AG04449 (cell line): ENCODE measurements at regions of chr6 and their contacts with region 1.

Region 1: DNA sequence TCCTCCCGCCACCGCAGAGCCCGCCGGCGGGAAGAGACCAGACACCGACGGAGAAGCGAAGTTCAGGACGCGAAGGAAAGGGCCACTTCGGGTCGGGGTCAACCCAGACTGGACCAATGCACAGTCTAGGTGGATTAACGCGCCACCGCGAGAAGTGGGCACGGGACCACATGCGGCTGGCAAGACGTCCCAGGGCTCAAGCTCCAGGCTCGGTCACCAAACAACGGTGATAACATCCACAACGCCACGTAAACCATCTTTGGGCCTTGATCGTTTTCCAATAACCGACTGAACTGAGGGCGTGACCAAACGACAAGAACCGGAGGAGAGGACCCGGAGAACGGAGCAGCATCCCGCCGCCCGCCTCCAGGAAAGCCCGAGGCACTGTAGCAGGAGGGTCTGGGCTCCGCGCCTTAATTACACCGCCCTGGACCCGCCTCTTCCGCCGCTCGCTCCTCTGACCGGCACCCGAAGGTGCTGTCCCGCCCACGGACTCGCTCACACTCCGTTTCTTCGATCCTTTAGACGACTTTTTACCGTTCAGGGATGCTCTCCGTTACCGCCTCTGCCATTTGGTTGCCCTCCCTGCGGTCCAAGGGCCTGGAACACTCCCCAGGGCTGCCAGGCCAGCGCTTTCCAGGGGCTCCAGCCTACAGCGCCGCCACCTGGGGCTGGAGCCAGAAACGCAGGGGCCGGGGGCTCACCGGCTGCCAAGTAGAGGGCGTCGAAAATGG is 44.1 kb downstream of the DPPA5 start:
- DNase-seq: no peak
- H3K4me3 ChIP-seq: peak overlapping the region; percentile 81
- CTCF ChIP-seq: peak; percentile 70

Region 2: GRCh38 chr6:73285674-73286283 is 24.2 kb before region 1 on chr6:
- CTCF ChIA-PET with region 1: interaction called, 49 read pairs
- POLR2A ChIA-PET with region 1: interaction called, 5 read pairs
- DNase-seq: peak; percentile 9
- H3K4me3 ChIP-seq: no peak overlapping the region
- CTCF ChIP-seq: peak; percentile 42